A673 (cell line): ENCODE measurements at regions of chr13 and their contacts with region 1.

Region 1: GRCh38 chr13:40671956-40672764 is 5.7 kb upstream of the FOXO1 start:
- DNase-seq: peak; percentile 82
- H3K4me3 ChIP-seq: no peak overlapping the region
- H3K27ac ChIP-seq: no peak overlapping the region
- H3K4me1 ChIP-seq: peaks cover 15% of the 10 kb centered on the region
- H3K27me3 ChIP-seq: no peaks in the 10 kb centered on the region
- CTCF ChIP-seq: no peak

Region 2: DNA sequence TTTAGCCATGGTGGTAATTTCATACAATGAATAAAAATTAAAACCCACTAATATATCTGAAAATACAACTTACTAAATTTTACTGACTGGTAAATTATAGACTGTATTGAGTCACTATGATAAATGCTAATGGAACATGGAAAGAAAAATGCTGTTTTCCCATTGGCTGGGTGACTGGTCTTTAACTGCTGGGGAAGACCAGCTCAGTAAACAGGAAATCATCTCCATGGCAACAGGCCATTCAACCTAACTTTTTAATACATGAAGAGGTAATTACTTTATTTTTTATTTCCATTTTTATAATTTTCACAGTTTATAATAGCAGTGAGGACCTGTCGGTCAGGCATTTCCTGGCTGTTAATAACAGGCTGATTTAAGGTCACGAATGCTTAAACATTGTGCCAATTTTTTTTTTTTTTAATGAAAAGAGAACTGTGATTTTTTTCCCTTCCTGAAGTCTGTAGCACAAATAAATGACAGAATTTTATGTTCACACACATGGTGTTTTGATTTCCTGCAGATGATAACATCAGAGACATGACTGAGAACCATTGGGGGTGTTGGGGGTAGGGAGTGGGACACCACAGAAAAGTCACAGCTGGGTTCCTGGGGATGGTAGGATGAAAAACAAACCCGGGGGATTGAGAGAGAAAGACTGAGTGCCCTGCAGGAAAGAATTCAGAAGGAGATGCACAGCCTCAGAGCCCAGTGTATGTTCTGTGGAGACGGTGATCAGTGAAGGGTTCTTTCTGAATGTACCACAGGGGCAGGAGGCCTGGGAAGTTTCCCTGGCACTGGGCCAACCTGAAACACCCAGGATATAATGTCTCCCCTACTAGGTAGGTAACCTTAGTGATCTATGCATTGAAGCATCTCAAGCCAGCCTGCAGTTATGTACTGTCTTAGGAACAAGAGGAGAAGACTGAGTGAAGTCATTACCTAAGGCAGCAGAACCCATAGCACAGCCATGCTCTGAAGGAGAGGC is 719.6 kb before region 1 on chr13:
- CTCF ChIA-PET with region 1: no interaction called
- POLR2A ChIA-PET with region 1: no interaction called
- intact Hi-C with region 1: loop called (anchors 5 kb)
- DNase-seq: peak; percentile 96
- H3K4me3 ChIP-seq: peak overlapping the region; percentile 4
- H3K27ac ChIP-seq: peak overlapping the region; percentile 76
- H3K4me1 ChIP-seq: peaks cover 31% of the 10 kb centered on the region
- H3K27me3 ChIP-seq: no peaks in the 10 kb centered on the region
- CTCF ChIP-seq: no peak

Region 3: DNA sequence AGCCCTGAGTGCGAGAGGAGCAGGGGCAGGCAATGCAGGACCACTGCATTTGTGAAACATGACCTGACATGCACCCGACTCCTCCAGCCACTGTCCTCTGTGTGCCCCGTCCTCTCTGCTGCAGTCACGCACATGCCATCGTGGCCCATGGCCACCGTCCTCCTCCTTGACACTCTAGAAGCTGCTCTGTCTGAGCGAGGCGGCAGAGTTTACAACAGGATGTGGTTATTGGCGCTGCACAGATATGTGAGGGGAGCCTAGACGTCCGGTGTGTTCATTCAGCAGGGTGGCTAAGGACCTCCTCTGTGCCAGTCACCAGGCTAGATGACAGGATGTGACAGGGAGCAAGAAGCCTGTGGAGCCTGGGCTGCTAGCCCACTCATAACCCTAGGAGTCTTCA is 283.5 kb before region 1 on chr13:
- CTCF ChIA-PET with region 1: no interaction called
- POLR2A ChIA-PET with region 1: no interaction called
- intact Hi-C with region 1: no loop called
- DNase-seq: no peak
- H3K4me3 ChIP-seq: no peak overlapping the region
- H3K27ac ChIP-seq: no peak overlapping the region
- H3K4me1 ChIP-seq: no peaks in the 10 kb centered on the region
- H3K27me3 ChIP-seq: no peaks in the 10 kb centered on the region
- CTCF ChIP-seq: no peak